GM23248 (cell line): ENCODE measurements at regions of chr10 and their contacts with region 1.

Region 1: GRCh38 chr10:35218339-35218955 is 91.8 kb downstream of the CREM start:
- DNase-seq: peak; percentile 94
- H3K4me3 ChIP-seq: peak overlapping the region; percentile 55
- H3K27ac ChIP-seq: no peak overlapping the region
- H3K4me1 ChIP-seq: no peaks in the 10 kb centered on the region
- H3K27me3 ChIP-seq: no peaks in the 10 kb centered on the region

Region 2: DNA sequence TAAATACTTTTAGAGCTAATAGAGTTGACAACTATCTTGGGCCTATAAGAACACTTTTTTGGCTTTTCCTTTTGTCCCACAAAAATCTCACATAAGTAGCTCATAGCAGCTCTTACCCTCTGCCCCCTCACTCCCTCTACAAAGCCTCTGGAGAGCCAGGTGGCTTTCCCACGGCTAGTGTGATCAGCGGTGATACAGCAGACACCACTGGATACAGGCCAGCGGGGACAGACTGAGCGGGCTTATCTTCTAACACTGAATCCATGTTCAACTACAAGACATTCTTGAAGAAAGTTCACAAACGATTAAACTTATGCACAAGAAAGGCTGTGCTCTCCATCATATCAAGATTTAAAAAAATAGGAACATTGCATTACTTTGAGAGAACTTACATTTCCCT is 780.5 kb before region 1 on chr10:
- in situ Hi-C with region 1: no loop called
- DNase-seq: no peak
- H3K4me3 ChIP-seq: no peak overlapping the region
- H3K27ac ChIP-seq: no peak overlapping the region
- H3K4me1 ChIP-seq: peaks cover 25% of the 10 kb centered on the region
- H3K27me3 ChIP-seq: no peaks in the 10 kb centered on the region

Region 3: GRCh38 chr10:34666008-34666705 is 552.3 kb before region 1 on chr10:
- in situ Hi-C with region 1: loop called (anchors 25 kb)
- DNase-seq: peak; percentile 96
- H3K4me3 ChIP-seq: no peak overlapping the region
- H3K27ac ChIP-seq: 0 out of 2 replicates have a peak overlapping the region, but pooled peaks have one; percentile 13
- H3K4me1 ChIP-seq: no peaks in the 10 kb centered on the region
- H3K27me3 ChIP-seq: no peaks in the 10 kb centered on the region

Region 4: DNA sequence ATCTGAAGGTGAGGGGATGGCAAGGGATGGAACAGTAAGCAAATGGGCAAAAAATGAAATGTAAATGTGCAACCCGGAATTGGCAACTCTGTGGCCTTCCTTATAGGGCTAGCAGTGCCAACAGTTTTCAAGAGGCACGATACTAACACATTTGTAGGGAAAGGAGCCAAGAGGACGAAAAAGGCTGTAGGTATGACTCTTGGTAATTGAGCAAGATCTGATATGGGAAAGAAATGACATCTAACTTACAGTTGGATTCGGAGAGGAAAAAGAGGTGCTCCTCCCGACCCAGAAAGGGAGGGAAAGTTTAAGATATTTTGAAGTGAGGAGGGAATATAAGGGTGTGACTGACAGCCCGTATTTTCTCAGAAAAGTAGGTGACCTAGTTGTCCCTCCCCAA is 93.9 kb before region 1 on chr10:
- in situ Hi-C with region 1: loop called (anchors 5 kb)
- DNase-seq: peak; percentile 32
- H3K4me3 ChIP-seq: no peak overlapping the region
- H3K27ac ChIP-seq: no peak overlapping the region
- H3K4me1 ChIP-seq: peaks cover 10% of the 10 kb centered on the region
- H3K27me3 ChIP-seq: no peaks in the 10 kb centered on the region

Region 5: DNA sequence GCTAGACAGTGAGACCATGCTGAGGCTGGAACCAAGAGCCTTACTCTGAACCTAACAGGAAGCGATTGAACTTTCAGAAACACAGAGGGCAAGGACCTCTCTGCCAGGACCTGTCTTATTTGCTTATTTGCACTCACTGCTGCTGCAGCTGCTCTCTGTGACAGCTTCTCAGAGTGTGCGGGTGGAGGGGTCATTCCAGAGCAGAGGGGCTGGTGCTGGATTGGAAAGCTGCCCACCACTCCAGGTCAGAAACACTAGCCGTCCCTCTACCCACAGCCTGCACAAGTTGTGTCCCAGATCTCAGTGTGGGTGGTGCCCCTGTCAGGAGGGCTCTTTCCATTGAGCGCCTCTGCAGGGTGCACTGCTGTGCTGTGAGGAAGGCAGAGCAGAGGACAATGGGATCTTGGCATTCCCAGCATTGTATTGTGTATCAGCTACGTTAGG is 244.1 kb after region 1 on chr10:
- in situ Hi-C with region 1: no loop called
- DNase-seq: no peak
- H3K4me3 ChIP-seq: no peak overlapping the region
- H3K27ac ChIP-seq: no peak overlapping the region
- H3K4me1 ChIP-seq: peaks cover 22% of the 10 kb centered on the region
- H3K27me3 ChIP-seq: no peaks in the 10 kb centered on the region